Left cardiac atrium (tissue), 4 donors: ENCODE measurements at regions of chr22 and their contacts with region 1.

Region 1: GRCh38 chr22:37316875-37317371 is 34.6 kb downstream of the CYTH4 start:
- DNase-seq: peak; percentile 79
- ATAC-seq: peak; percentile 83 to 85

Region 2: DNA sequence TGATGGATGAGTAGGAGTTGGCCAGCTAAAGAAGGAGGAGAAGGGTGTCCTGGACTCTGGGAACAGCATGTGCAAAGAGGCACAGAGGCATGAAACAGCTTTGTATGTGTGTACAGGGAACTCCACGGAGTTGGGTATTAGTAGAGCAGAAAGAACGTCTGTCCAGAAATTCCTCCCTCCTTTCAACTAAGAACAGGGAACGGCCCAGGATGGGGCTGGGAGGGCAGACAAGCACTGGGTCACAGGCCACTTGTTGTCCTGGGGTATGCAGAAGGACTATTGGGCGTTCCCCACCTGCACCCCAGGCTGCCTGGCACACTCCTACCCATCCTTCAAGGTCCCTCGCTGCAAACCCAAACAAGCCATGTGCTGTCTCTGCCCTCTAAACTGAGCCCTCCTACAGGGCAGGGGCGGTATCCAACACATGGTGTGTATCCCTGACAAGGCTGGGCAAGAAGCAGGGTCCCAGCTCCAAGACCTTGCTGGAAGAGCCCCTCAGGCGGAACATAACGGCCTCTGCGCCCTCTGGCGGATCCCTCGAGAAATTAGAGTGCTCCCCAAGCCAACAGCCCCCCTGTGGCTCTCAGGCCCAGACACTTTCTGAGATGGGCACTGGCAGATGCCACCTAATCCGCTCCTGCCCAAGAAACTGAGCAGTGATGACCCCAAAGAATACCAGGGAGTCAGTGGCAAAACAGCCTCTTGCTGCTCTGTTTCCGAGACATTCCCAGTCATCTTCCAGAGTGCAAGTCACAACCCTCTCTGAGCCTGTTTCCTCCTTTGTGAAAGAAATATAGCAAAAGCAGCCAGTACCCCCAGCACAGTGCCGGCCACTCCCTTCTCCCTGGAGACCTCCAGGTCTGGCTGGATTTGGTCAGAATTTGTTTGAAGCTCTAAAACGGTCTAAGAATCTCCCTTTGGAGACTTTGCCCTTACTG is 112.0 kb after region 1 on chr22:
- intact Hi-C with region 1: loop called (anchors 1 to 5 kb)
- DNase-seq: peak; percentile 53
- ATAC-seq: peak in 1 of 2 donors; percentile 33

Region 3: DNA sequence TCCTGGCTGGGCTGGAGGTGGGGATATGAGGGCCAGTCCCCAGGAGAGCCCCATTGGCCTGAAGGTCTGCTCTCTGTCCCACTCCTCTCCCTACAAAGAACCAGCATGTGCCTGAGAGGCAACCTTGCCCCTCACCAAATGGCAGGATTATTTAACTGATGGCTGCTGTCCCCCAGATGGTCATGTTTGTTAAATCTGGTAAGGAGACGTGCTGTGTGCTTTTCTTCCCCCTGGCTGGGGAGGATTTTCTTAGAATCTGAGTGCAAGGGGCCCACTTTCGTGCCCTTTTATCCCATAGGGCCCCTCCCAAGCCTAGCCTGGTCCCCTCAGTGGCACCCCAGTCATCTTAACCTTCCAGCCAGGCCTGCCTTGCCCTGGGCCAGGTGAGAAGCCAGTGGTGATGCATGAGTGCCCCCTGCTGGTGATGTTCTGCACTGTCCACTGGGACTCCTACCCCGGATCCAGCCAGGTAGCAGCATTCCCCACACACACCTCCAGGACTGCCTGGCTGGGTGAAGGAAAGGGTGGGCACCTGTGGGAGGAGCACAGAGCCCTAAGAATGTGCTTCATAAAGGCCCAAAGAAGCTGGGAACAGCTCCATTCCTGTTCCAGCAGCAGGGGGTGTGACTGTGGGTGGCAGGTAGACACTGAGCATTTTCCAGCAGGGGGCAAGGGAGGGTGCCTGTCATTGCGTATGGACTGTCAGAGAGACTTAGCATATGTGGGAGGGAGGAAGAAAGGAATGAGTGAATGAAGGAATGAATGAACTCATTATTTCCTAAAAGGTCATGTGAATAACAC is 140.4 kb after region 1 on chr22:
- intact Hi-C with region 1: loop called (anchors 2 to 10 kb)
- DNase-seq: peak; percentile 72
- ATAC-seq: peak; percentile 74 to 77

Region 4: GRCh38 chr22:37566903-37567820 is 250.2 kb after region 1 on chr22:
- intact Hi-C with region 1: loop called in 1 of 2 experiments (anchors 10 kb)
- DNase-seq: peak; percentile 81
- ATAC-seq: peak; percentile 40 to 60